CD14-positive monocyte (primary cell): ENCODE measurements at regions of chr10 and their contacts with region 1.

Region 1: DNA sequence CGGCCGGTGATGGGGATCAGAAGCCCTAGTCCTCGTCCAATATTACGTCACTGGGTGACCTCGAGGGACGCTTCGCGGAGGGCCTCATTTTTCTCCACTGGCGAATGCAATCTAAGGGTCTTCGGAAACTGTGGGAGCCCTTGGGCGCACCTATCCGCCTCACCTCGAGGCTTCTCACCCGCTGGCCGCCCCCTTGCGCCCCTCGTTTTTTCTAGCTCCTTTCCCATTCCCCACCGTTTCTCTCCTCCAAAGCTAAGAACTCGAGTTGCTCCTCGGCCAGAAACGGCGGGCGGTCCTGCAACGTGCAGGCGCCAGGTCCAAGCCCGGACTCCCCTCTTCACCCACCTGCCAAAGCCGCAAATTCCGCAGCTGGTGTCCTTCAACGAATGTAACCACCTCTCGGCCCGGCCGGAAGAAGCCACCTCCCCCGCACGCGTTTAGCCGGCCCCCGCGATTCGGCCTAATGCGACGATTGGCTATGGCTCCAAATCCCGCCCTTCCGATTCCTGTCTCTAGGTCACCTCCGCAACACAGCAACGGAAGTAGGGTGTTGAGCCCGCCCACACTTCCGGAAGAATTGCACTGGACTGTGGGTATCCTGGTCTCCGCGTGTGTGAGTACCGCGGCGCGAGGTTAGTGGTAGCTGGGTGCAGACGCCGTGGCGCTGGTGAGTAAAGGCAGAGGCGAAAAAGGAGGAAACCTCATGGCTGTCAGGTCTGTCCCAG is at the starts of genes ATP5MK and PDCD11:
- DNase-seq: peak; percentile 95 to 98 (median 96)
- H3K4me3 ChIP-seq: peak within 1 kb of the TSS; percentile 68 to 88 (median 78)
- H3K4me3 Mint-ChIP-seq: peak within 1 kb of the TSS; percentile 92 to 95
- H3K27ac ChIP-seq: peak within 1 kb of the TSS; percentile 55 to 85
- H3K27ac Mint-ChIP-seq: peak within 1 kb of the TSS; percentile 91 to 96 (median 94)
- H3K4me1 ChIP-seq: peaks cover 26 to 40% of the 10 kb centered on the region in 2 donors
- H3K4me1 Mint-ChIP-seq: peaks cover 40% of the 10 kb centered on the region
- H3K27me3 ChIP-seq: no peaks in the 10 kb centered on the region
- H3K27me3 Mint-ChIP-seq: no peaks in the 10 kb centered on the region
- CTCF ChIP-seq: no peak
- polyA plus RNA-seq, gene ATP5MK: 285 to 531 (median 529) TPM
- polyA plus RNA-seq, gene PDCD11: 2.9 to 9.7 (median 3.3) TPM

Region 2: GRCh38 chr10:102743588-102744373 is 652.4 kb before region 1 on chr10 and contains the start of gene WBP1L:
- intact Hi-C with region 1: loop called in 1 of 2 experiments (anchors 10 kb)
- DNase-seq: peak; percentile 97 to 99 (median 98)
- H3K4me3 ChIP-seq: peak within 1 kb of the TSS; percentile 92 to 94 (median 93)
- H3K4me3 Mint-ChIP-seq: peak within 1 kb of the TSS; percentile 98 to 99
- H3K27ac ChIP-seq: peak within 1 kb of the TSS; percentile 56 to 91
- H3K27ac Mint-ChIP-seq: peak within 1 kb of the TSS; percentile 84 to 98 (median 94)
- H3K4me1 ChIP-seq: peaks cover 30 to 32% of the 10 kb centered on the region in 2 donors
- H3K4me1 Mint-ChIP-seq: peaks cover 37% of the 10 kb centered on the region
- H3K27me3 ChIP-seq: no peaks in the 10 kb centered on the region
- H3K27me3 Mint-ChIP-seq: peaks cover 0 to 9% (median 0%) of the 10 kb centered on the region in 3 donors
- CTCF ChIP-seq: no peak
- polyA plus RNA-seq, gene WBP1L: 24.8 to 43.0 (median 38.3) TPM

Region 3: GRCh38 chr10:103367782-103368518 is 28.3 kb before region 1 on chr10 and contains the start of gene TAF5:
- intact Hi-C with region 1: loop called in 1 of 2 experiments (anchors 2 kb)
- DNase-seq: peak; percentile 88 to 90 (median 89)
- H3K4me3 ChIP-seq: peak within 1 kb of the TSS; percentile 69 to 93 (median 85)
- H3K4me3 Mint-ChIP-seq: peak within 1 kb of the TSS; percentile 84 to 92
- H3K27ac ChIP-seq: peak within 1 kb of the TSS; percentile 65 to 77
- H3K27ac Mint-ChIP-seq: peak within 1 kb of the TSS; percentile 83 to 93 (median 87)
- H3K4me1 ChIP-seq: peaks cover 15 to 16% of the 10 kb centered on the region in 2 donors
- H3K4me1 Mint-ChIP-seq: peaks cover 6% of the 10 kb centered on the region
- H3K27me3 ChIP-seq: no peaks in the 10 kb centered on the region
- H3K27me3 Mint-ChIP-seq: peaks cover 0 to 2% (median 0%) of the 10 kb centered on the region in 3 donors
- CTCF ChIP-seq: no peak
- polyA plus RNA-seq, gene TAF5: 1.0 to 2.4 (median 2.4) TPM